Sciatic nerve (tissue), 2 donors: ENCODE measurements at regions of chr2 and their contacts with region 1.

Region 1: GRCh38 chr2:237060534-237061312 is 25.0 kb upstream of the COPS8 start:
- DNase-seq: no peak
- ATAC-seq: peak; percentile 87

Region 2: GRCh38 chr2:236355911-236356310 is 704.8 kb before region 1 on chr2:
- intact Hi-C with region 1: loop called (anchors 2 kb)
- DNase-seq: no peak
- ATAC-seq: peak; percentile 14

Region 3: DNA sequence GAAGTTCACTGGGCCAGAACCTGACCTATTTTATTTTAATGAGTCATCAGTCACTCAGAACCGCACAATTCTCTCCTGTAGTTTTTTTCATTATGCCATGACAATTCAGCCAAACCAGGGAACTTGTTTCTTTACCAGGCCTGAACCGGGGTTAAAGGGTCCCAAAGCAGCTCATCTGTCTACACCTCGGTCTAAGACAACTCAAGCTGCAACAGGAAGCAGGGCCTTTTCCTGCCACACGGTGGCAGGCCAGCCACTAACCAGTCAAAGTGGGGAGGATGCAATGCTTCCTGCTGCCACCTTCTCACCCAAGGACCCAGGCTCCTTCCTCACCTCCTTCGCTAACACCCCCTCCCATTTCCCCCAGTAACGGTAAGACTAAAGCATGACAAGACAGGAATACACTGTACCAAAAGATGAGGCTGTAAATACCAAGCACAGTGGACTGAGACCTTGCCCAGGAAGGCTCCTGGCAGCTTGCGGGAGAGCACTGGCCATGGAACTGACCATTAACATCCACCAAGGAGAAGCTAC is 547.8 kb before region 1 on chr2:
- intact Hi-C with region 1: loop called (anchors 10 kb)
- DNase-seq: peak; percentile 80
- ATAC-seq: peak; percentile 93

Region 4: DNA sequence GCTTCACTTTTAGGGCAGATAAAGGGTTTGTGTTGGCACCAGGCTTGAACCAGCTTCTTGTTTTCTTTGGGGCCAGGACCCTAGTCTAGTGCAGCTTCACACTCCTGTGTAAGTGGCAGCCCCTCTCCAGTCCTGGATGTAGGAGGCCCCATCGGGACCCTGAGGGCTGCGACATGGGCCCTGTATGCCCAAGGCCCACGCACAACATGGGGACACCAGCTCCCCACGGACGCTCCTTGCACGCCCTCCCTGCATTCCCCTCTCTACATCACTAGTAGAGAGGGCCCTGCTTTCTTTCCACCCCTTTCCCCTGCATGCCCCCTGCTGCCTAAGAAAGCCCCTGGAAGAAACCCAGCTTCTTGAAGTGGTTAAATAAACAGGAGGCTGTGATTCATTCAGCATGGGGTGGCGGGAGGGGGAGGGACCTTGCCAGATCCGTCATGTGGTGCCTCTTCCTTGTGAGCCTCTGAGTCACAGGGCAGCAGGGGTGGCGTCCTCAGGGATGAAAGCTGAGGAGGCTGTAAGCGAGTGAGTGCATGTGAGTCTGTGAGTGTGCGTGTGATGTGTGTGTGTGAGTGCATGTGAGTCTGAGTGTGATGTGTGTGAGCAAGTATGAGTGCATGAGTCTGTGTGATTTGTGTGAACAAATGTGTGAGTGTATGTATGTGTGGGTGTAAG is 67.4 kb after region 1 on chr2:
- intact Hi-C with region 1: no loop called
- DNase-seq: peak; percentile 94
- ATAC-seq: peak; percentile 99